Aorta (tissue), 5 donors: ENCODE measurements at regions of chr10 and their contacts with region 1.

Region 1: DNA sequence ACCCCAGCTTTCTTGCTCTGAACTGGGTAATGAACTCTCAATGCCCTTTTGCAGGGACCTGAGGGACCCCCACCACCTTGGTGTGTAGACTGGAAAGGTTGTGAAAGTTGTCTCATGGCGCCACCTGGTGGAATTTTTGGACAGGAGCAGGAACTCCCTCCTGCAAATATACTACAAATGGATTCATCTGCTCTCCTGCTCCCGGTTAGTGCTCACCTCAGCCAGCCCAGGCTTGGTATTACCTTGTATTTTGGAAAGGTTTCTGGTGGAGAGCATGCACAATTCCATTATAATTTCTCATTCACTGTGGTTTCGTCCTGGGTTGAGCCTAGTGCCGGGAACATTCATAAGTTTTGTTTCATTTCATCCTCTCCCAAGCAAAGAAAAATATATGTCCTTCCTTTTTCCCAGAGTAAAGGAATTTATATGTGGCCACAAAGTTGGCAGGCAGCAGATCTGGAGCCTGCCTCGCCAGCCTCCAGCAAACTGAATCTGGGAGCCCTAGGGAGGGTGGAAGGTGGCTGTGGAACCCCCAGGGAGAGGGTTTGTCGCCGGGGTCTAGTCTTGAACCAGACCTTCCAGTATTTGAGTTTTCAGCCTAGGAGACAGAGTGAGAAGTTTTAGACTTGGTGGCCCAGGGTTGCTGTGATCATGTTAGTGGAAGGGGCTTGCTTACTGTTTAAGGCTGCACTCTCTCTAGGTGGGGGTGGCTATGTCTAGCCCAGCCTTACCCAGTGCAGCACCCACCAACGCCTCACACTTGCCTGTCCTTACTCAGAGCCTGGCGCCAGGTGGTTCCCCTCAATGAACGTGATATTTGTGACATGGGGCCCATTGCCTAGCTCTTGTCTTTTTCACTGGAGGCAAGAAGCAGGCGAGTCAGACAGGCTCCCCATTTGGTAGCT is 9.5 kb downstream of the FAM241B start:
- DNase-seq: peak; percentile 74 to 82
- ATAC-seq: no peak
- H3K4me3 ChIP-seq: no peak overlapping the region
- H3K27ac ChIP-seq: no peak overlapping the region
- H3K4me1 ChIP-seq: no peaks in the 10 kb centered on the region
- H3K27me3 ChIP-seq: no peaks in the 10 kb centered on the region

Region 2: DNA sequence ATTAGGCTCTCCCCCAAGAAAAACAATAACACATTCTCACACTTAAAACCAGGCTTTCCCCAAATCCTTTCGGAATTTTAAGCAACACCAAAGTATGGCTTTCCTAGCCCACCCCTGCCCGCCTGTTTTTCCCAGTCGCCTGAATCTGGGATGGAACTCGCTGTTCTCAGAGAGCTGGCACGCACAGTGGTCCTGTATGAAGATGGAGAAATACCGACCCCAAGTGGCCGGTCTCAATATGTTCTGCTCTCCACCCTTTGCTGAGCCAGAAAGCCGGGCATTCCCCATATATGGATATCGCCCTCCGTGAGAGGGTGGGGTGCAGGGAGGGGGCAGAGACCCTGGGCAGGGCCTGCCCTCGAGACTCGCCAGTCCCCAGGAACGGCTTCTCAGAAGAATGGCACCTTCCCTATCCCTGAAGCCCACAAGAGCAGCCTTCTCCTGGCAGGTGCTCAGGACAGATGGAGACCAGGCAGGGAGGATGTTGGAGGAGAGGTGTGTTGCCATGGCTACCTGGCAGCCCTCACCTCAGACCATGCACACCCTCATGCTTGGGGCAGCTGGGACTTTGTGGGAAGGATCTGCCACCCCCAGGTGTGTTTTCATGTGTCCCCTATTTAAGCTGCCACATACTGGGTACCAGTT is 226.2 kb before region 1 on chr10:
- intact Hi-C with region 1: loop called in 1 of 2 experiments (anchors 10 kb)
- DNase-seq: peak; percentile 78 to 86
- ATAC-seq: peak; percentile 67
- H3K4me3 ChIP-seq: no peak overlapping the region
- H3K27ac ChIP-seq: no peak overlapping the region
- H3K4me1 ChIP-seq: no peaks in the 10 kb centered on the region
- H3K27me3 ChIP-seq: no peaks in the 10 kb centered on the region

Region 3: DNA sequence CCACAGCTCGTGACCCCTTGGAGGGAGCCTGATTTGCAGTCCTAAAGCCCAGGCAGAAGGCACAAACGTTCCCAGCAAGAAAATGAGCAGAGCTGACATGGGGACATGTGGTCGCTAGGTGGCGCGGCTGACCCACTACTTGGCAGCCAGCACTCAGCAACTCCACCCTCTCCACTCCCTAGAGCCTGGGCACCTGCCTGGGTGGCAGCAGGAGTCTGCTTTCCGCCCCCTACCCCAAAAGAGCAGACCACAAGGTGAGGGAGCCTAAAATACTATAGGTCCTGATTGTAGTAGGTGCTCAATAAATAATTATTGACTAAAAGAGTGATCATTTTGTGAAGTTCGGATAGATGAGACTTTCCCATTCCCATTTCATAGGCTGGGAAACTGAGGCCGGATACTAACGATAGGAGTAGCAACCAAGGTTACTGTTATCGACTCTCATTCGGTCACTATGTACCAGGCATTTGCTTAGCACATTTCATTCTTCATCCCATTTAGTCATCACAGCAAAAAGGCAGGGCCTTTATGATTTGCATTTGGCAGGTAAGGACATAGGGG is 123.8 kb before region 1 on chr10:
- intact Hi-C with region 1: loop called (anchors 1 to 2 kb)
- DNase-seq: peak; percentile 75 to 90
- ATAC-seq: peak; percentile 73
- H3K4me3 ChIP-seq: no peak overlapping the region
- H3K27ac ChIP-seq: no peak overlapping the region
- H3K4me1 ChIP-seq: no peaks in the 10 kb centered on the region
- H3K27me3 ChIP-seq: no peaks in the 10 kb centered on the region

Region 4: DNA sequence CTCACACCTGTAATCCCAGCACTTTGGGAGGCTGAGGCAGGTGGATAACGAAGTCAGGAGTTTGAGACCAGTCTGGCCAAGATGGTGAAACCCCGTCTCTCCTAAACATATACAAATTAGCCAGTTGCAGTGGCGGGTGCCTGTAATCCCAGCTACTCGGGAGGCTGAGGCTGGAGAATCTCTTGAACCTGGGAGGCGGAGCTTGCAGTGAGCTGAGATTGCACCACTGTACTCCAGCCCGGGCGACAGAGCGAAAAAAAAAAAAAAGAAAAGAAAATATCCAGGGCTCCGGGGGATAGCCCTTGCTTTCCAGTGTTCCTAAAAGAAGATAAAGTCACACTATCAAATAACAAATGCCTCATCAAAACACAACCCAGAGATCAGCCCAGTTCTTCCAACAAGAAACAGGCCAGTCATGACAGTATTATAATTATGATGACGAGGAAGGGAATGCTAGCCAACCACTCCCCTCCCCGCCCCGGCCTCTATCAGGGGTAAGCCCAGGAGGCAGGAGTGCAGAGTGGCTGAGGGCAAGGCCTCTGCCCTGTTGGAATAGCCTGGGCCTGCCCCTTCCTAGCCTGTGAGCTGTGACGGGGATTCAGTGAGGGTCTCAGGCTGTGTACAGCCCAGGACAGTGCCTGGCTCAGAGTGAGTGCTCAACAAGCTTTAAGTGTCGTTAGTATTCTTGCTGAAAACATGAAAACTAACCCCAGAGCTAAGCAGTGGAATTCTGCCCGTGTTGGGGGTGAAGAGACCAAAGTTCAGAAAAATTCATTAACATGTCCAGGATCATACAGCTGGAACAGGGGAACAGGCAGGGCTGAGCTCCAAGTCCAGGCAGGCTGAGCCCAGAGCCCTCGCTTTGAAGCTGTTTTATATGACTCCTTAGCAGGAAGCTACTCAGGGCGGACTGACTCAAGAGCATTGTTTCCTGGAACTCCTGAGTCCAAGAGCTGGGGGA is 44.8 kb after region 1 on chr10:
- intact Hi-C with region 1: no loop called
- DNase-seq: peak in 1 of 2 donors; percentile 65
- ATAC-seq: peak; percentile 70
- H3K4me3 ChIP-seq: no peak overlapping the region
- H3K27ac ChIP-seq: peak overlapping the region in 1 of 2 donors; percentile 77
- H3K4me1 ChIP-seq: no peaks in the 10 kb centered on the region
- H3K27me3 ChIP-seq: no peaks in the 10 kb centered on the region

Region 5: GRCh38 chr10:69960988-69961880 is 321.7 kb after region 1 on chr10:
- intact Hi-C with region 1: loop called in 1 of 2 experiments (anchors 5 kb)
- DNase-seq: no peak
- ATAC-seq: no peak
- H3K4me3 ChIP-seq: no peak overlapping the region
- H3K27ac ChIP-seq: no peak overlapping the region
- H3K4me1 ChIP-seq: no peaks in the 10 kb centered on the region
- H3K27me3 ChIP-seq: no peaks in the 10 kb centered on the region